Heart left ventricle (tissue), 16 donors: ENCODE measurements at regions of chr5 and their contacts with region 1.

Region 1: DNA sequence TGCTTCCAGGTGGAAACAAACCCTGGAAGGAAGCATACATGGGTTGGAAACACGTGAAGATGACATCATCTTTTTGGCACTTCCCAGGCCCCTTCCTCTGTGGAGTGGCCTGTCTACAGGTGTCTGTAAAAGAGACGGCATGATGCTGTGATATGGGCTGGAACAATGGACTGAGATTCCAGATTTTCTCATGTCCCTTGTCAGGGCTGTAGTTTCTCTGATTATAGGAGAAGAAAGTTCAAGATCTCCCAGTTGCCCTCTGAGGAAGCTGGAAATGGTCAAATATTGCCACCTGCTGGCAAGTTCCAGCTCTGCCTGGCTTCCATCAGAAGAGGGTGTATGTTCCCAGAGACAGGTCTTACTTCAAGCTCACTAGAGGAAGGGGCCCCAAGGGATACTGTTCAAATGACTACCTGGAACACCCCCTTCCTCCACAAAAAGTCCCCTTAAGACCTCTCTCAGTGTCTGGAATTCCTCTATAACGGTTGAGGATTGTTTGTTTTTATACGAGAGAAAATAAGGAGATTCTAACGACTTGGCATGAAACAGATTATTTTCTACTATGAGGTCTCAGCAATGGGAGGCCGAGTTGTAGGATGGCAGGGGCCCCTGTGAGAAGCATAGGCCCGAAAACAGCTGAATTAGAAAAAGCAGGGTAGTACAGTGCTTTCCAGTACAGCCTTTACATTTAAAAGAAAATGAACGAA is 7.3 kb upstream of the ANXA6 start:
- DNase-seq: peak; percentile 60 to 76 (median 74)
- ATAC-seq: peak; percentile 87 to 92 (median 90)
- H3K4me3 ChIP-seq: no peak overlapping the region
- H3K27ac ChIP-seq: no peak overlapping the region
- H3K4me1 ChIP-seq: peaks cover 0 to 20% (median 9%) of the 10 kb centered on the region in 12 donors
- H3K27me3 ChIP-seq: no peaks in the 10 kb centered on the region
- CTCF ChIP-seq: peak; percentile 85 to 96 (median 93)
- POLR2A ChIP-seq: no peak

Region 2: DNA sequence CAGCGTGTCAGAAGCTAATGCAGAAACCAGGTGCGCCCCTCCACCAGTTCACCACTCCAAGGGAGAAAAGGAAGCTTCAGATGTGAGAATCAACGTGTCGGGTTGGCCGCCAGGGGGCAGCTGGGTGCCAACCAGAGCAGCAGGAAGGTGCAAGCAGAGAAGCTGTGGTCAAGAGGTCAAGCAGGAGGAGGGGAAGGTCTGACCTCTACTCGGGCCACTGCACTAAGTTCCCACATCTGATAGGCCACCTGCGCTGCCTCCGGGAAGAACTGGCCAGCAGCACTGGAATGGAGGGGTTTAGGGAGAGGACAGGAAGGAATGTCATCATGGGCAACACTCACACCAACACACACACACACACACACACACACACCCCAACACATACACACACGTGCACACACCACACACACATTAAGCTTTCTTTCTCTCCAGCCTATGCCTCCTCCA is 38.6 kb before region 1 on chr5:
- intact Hi-C with region 1: loop called (anchors 1 to 2 kb)
- DNase-seq: peak; percentile 73 to 87 (median 78)
- ATAC-seq: peak; percentile 30 to 62 (median 56)
- H3K4me3 ChIP-seq: no peak overlapping the region
- H3K27ac ChIP-seq: peak overlapping the region in 1 of 12 donors; percentile 42
- H3K4me1 ChIP-seq: peaks cover 0 to 29% (median 15%) of the 10 kb centered on the region in 12 donors
- H3K27me3 ChIP-seq: no peaks in the 10 kb centered on the region
- CTCF ChIP-seq: peak; percentile 70 to 86 (median 78)
- POLR2A ChIP-seq: no peak

Region 3: GRCh38 chr5:151384106-151384505 is 219.3 kb after region 1 on chr5:
- intact Hi-C with region 1: no loop called
- DNase-seq: no peak
- ATAC-seq: peak in 1 of 4 donors; percentile 31
- H3K4me3 ChIP-seq: no peak overlapping the region
- H3K27ac ChIP-seq: no peak overlapping the region
- H3K4me1 ChIP-seq: peaks cover 0 to 7% (median 0%) of the 10 kb centered on the region in 12 donors
- H3K27me3 ChIP-seq: peaks cover 0 to 4% (median 0%) of the 10 kb centered on the region in 9 donors
- CTCF ChIP-seq: no peak
- POLR2A ChIP-seq: no peak